Sigmoid colon (tissue), 7 donors: ENCODE measurements at regions of chr13 and their contacts with region 1.

Region 1: GRCh38 chr13:43686557-43686956 is 100.2 kb downstream of the ENOX1 start:
- DNase-seq: peak; percentile 77
- H3K4me3 ChIP-seq: no peak overlapping the region
- H3K27ac ChIP-seq: peak overlapping the region; percentile 58 to 78 (median 74)
- H3K4me1 ChIP-seq: peaks cover 0 to 80% (median 49%) of the 10 kb centered on the region in 4 donors
- H3K27me3 ChIP-seq: no peaks in the 10 kb centered on the region
- CTCF ChIP-seq: no peak
- EP300 ChIP-seq: no peak
- POLR2A ChIP-seq: no peak

Region 2: GRCh38 chr13:42110410-42111155 is 1576.0 kb before region 1 on chr13:
- intact Hi-C with region 1: no loop called
- DNase-seq: no peak
- H3K4me3 ChIP-seq: no peak overlapping the region
- H3K27ac ChIP-seq: no peak overlapping the region
- H3K4me1 ChIP-seq: peaks cover 0 to 15% (median 4%) of the 10 kb centered on the region in 4 donors
- H3K27me3 ChIP-seq: no peaks in the 10 kb centered on the region
- CTCF ChIP-seq: peak; percentile 74 to 85 (median 78)
- EP300 ChIP-seq: no peak
- POLR2A ChIP-seq: no peak

Region 3: GRCh38 chr13:43767341-43767931 is 80.9 kb after region 1 on chr13:
- intact Hi-C with region 1: loop called (anchors 5 kb)
- DNase-seq: peak; percentile 78
- H3K4me3 ChIP-seq: peak overlapping the region in 1 of 4 donors; percentile 3
- H3K27ac ChIP-seq: peak overlapping the region; percentile 68 to 82 (median 72)
- H3K4me1 ChIP-seq: peaks cover 0 to 77% (median 59%) of the 10 kb centered on the region in 4 donors
- H3K27me3 ChIP-seq: no peaks in the 10 kb centered on the region
- CTCF ChIP-seq: no peak
- EP300 ChIP-seq: no peak
- POLR2A ChIP-seq: no peak